ENCODE measurements at regions of chr16 and their contacts with region 1.

Region 1: GRCh38 chr16:75256696-75257343 is 5.4 kb upstream of the BCAR1 start:
- DNase-seq: peak; percentile 41 to 43
- ATAC-seq: peak; percentile 12 to 52 (median 43)
- H3K4me3 ChIP-seq: peak overlapping the region in 3 of 10 donors; percentile 11 to 22 (median 13)
- H3K27ac ChIP-seq: peak overlapping the region; percentile 53 to 92 (median 76)
- H3K4me1 ChIP-seq: peaks cover 63 to 99% (median 89%) of the 10 kb centered on the region in 9 donors
- H3K27me3 ChIP-seq: peaks cover 0 to 68% (median 0%) of the 10 kb centered on the region in 7 donors
- CTCF ChIP-seq: no peak

Region 2: GRCh38 chr16:75181630-75182029 is 75.2 kb before region 1 on chr16:
- intact Hi-C with region 1: no loop called
- DNase-seq: no peak
- ATAC-seq: no peak
- H3K4me3 ChIP-seq: no peak overlapping the region
- H3K27ac ChIP-seq: no peak overlapping the region
- H3K4me1 ChIP-seq: no peaks in the 10 kb centered on the region
- H3K27me3 ChIP-seq: no peaks in the 10 kb centered on the region
- CTCF ChIP-seq: no peak

Region 3: GRCh38 chr16:75192601-75193297 is 64.1 kb before region 1 on chr16:
- intact Hi-C with region 1: no loop called
- DNase-seq: no peak
- ATAC-seq: no peak
- H3K4me3 ChIP-seq: no peak overlapping the region
- H3K27ac ChIP-seq: no peak overlapping the region
- H3K4me1 ChIP-seq: no peaks in the 10 kb centered on the region
- H3K27me3 ChIP-seq: peaks cover 0 to 18% (median 6%) of the 10 kb centered on the region in 7 donors
- CTCF ChIP-seq: no peak

Region 4: DNA sequence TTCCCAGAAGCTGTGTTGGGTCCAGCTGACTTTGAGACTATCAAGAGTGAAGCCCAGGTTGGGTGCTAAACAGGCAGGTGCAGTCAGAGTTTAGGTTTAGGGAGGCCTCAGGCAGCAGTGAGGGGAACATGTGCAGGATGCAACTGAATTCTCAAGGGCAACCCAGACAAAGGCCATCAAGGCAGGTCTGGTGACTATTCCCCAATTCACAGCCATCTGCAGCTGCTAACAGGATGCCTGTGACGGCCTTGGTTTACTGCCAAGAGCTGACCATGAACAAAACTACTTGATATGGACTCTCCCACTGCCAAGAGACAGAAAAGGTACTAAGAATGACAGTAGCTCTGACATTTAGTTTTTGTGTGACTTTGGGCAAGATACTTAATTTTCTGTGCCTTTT is 39.8 kb after region 1 on chr16:
- intact Hi-C with region 1: loop called in 2 of 10 experiments (anchors 5 kb)
- DNase-seq: peak; percentile 21 to 85
- ATAC-seq: peak; percentile 81 to 95 (median 90)
- H3K4me3 ChIP-seq: no peak overlapping the region
- H3K27ac ChIP-seq: peak overlapping the region in 9 of 10 donors; percentile 36 to 74 (median 60)
- H3K4me1 ChIP-seq: peaks cover 7 to 22% (median 10%) of the 10 kb centered on the region in 9 donors
- H3K27me3 ChIP-seq: no peaks in the 10 kb centered on the region
- CTCF ChIP-seq: no peak

Measured in heart right ventricle (tissue), 16 donors.